ENCODE measurements at regions of chrX and their contacts with region 1.

Region 1: GRCh38 chrX:120452131-120452530 is 17.0 kb downstream of the LAMP2 start:
- DNase-seq: no peak
- H3K4me3 ChIP-seq: no peak overlapping the region
- H3K4me3 Mint-ChIP-seq: no peak overlapping the region
- H3K27ac ChIP-seq: no peak overlapping the region
- H3K27ac Mint-ChIP-seq: no peak overlapping the region
- H3K4me1 ChIP-seq: peaks cover 22% of the 10 kb centered on the region
- H3K4me1 Mint-ChIP-seq: peaks cover 15 to 30% (median 18%) of the 10 kb centered on the region in 4 donors
- H3K27me3 ChIP-seq: no peaks in the 10 kb centered on the region
- H3K27me3 Mint-ChIP-seq: no peaks in the 10 kb centered on the region

Region 2: GRCh38 chrX:120365320-120365719 is 86.8 kb before region 1 on chrX:
- CTCF ChIA-PET with region 1: interaction called, 16 read pairs
- POLR2A ChIA-PET with region 1: no interaction called
- intact Hi-C with region 1: no loop called
- DNase-seq: peak; percentile 19 to 44 (median 31)
- H3K4me3 ChIP-seq: no peak overlapping the region
- H3K4me3 Mint-ChIP-seq: no peak overlapping the region
- H3K27ac ChIP-seq: no peak overlapping the region
- H3K27ac Mint-ChIP-seq: no peak overlapping the region
- H3K4me1 ChIP-seq: no peaks in the 10 kb centered on the region
- H3K4me1 Mint-ChIP-seq: no peaks in the 10 kb centered on the region
- H3K27me3 ChIP-seq: no peaks in the 10 kb centered on the region
- H3K27me3 Mint-ChIP-seq: peaks cover 2 to 4% of the 10 kb centered on the region in 2 donors

Region 3: DNA sequence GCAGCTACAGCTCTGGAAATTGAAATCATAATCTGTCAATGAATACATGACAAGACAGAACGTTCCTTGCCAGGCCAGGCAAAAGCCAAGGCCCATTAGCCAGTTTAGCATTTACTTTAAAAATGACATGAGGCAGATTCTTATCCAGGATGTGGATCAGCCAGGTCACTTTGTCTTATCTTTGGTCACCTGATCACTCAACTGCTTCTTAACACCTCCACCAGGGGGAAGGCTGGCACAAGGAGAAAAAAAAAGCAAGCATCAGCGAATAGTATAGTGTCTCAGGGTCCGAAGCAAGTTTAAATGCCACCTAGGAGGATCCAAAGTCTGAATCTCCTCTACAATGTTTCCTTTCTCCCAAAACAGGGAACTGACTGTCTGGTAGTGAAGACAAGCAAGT is 71.4 kb before region 1 on chrX:
- CTCF ChIA-PET with region 1: interaction called, 43 read pairs
- POLR2A ChIA-PET with region 1: no interaction called
- intact Hi-C with region 1: loop called (anchors 2 kb)
- DNase-seq: peak; percentile 39 to 54 (median 47)
- H3K4me3 ChIP-seq: no peak overlapping the region
- H3K4me3 Mint-ChIP-seq: no peak overlapping the region
- H3K27ac ChIP-seq: no peak overlapping the region
- H3K27ac Mint-ChIP-seq: no peak overlapping the region
- H3K4me1 ChIP-seq: no peaks in the 10 kb centered on the region
- H3K4me1 Mint-ChIP-seq: peaks cover 0 to 7% (median 4%) of the 10 kb centered on the region in 4 donors
- H3K27me3 ChIP-seq: no peaks in the 10 kb centered on the region
- H3K27me3 Mint-ChIP-seq: peaks cover 0 to 1% of the 10 kb centered on the region in 2 donors

Region 4: DNA sequence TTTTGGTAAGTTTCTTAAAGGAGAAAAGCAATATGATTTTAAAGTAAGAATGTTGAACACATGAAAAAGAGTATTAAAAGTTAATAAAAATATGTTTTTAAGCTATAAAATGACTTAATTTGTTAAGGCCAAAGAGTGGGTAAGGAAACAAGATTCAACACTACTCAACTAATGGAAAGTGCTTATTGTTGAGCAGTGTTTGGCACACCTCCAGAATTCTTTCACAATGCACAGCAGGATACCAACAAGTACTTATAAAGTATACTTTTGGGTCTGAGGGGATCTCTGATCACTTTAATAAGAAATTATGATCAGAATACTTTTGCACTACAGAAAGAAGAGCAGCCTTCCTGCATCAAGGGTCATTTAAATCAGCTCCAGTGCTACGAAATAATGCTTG is 11.1 kb after region 1 on chrX:
- CTCF ChIA-PET with region 1: interaction called, 15 read pairs
- POLR2A ChIA-PET with region 1: interaction called, 9 read pairs
- intact Hi-C with region 1: no loop called
- DNase-seq: no peak
- H3K4me3 ChIP-seq: no peak overlapping the region
- H3K4me3 Mint-ChIP-seq: no peak overlapping the region
- H3K27ac ChIP-seq: no peak overlapping the region
- H3K27ac Mint-ChIP-seq: no peak overlapping the region
- H3K4me1 ChIP-seq: peaks cover 58% of the 10 kb centered on the region
- H3K4me1 Mint-ChIP-seq: peaks cover 21 to 56% (median 29%) of the 10 kb centered on the region in 4 donors
- H3K27me3 ChIP-seq: no peaks in the 10 kb centered on the region
- H3K27me3 Mint-ChIP-seq: no peaks in the 10 kb centered on the region

Region 5: DNA sequence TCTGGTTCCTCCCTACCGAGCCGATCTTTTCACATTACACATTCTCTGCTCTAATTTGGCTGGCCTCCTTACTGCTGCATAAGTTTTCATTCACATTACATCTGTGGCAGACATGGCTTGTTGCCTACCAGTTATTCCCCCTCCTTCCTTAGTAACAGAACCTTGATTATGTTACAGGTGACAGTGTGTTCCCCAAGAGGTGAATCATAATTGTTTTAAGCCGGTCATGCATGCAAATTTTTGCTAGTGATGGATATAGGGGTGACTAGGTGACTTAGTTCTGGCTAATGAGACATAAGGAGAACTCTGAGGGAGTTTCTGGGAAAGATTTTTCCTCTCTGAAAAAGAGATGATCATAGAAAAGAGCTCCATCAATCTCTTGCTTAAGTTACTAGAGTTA is 25.3 kb after region 1 on chrX:
- CTCF ChIA-PET with region 1: interaction called, 20 read pairs
- POLR2A ChIA-PET with region 1: no interaction called
- intact Hi-C with region 1: no loop called
- DNase-seq: no peak
- H3K4me3 ChIP-seq: no peak overlapping the region
- H3K4me3 Mint-ChIP-seq: no peak overlapping the region
- H3K27ac ChIP-seq: no peak overlapping the region
- H3K27ac Mint-ChIP-seq: no peak overlapping the region
- H3K4me1 ChIP-seq: no peaks in the 10 kb centered on the region
- H3K4me1 Mint-ChIP-seq: no peaks in the 10 kb centered on the region
- H3K27me3 ChIP-seq: no peaks in the 10 kb centered on the region
- H3K27me3 Mint-ChIP-seq: no peaks in the 10 kb centered on the region

Region 6: GRCh38 chrX:121036137-121036536 is 584.0 kb after region 1 on chrX:
- CTCF ChIA-PET with region 1: no interaction called
- POLR2A ChIA-PET with region 1: no interaction called
- intact Hi-C with region 1: no loop called
- DNase-seq: no peak
- H3K4me3 ChIP-seq: no peak overlapping the region
- H3K4me3 Mint-ChIP-seq: no peak overlapping the region
- H3K27ac ChIP-seq: no peak overlapping the region
- H3K27ac Mint-ChIP-seq: no peak overlapping the region
- H3K4me1 ChIP-seq: no peaks in the 10 kb centered on the region
- H3K4me1 Mint-ChIP-seq: no peaks in the 10 kb centered on the region
- H3K27me3 ChIP-seq: no peaks in the 10 kb centered on the region
- H3K27me3 Mint-ChIP-seq: no peaks in the 10 kb centered on the region

Measured in CD4-positive, alpha-beta memory T cell (primary cell).